ENCODE measurements at regions of chr22 and their contacts with region 1.

Region 1: DNA sequence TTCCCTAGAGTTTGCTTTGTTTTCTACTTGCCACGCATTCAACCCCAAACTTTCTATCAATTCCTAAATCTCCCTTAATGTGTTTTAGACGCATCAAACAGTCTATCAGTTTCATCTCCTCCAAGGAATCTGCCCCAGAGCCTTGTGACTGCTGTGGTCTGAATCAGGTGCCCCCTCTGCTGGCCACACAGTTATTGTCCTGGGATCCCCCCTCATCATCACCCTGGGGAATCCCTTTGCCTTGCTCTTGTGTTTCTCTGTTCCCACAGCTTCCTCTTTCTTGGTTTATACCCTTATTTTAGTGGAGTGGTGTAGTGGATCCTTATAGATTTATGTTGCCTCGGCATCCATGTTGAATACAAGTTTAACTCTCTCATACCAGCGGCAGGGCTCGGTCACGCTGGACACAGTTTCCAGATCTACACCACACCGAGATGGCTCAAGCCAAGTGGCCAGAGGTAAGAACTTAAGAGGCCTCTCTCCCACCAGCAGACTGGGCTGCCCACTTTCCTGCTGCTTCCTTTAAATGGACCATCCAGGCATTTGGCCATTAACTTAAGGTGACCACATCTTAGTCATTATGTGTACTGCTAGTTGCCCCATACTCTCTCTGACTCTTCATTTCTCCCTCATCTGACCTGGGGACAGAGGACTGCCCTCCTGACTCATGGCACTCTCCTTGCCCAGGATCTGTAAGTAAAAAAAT is 8.2 kb downstream of the UPB1 start:
- H3K4me3 ChIP-seq: no peak overlapping the region
- H3K27ac ChIP-seq: no peak overlapping the region
- H3K4me1 ChIP-seq: peaks cover 12% of the 10 kb centered on the region
- CTCF ChIP-seq: 0 out of 2 replicates have a peak, but pooled peaks have one; percentile 23

Region 2: GRCh38 chr22:24423519-24424000 is 79.7 kb before region 1 on chr22:
- CTCF ChIA-PET with region 1: interaction called, 99 read pairs
- POLR2A ChIA-PET with region 1: no interaction called
- H3K4me3 ChIP-seq: peak overlapping the region; percentile 57
- H3K27ac ChIP-seq: no peak overlapping the region
- H3K4me1 ChIP-seq: no peaks in the 10 kb centered on the region
- CTCF ChIP-seq: no peak